ENCODE measurements at regions of chr7 and their contacts with region 1.

Region 1: GRCh38 chr7:77651573-77652162 is 44.6 kb upstream of the RSBN1L start:
- DNase-seq: peak; percentile 63
- ATAC-seq: no peak
- H3K4me3 Mint-ChIP-seq: no peak overlapping the region
- H3K27ac Mint-ChIP-seq: no peak overlapping the region
- H3K4me1 Mint-ChIP-seq: no peaks in the 10 kb centered on the region
- H3K27me3 Mint-ChIP-seq: no peaks in the 10 kb centered on the region

Region 2: DNA sequence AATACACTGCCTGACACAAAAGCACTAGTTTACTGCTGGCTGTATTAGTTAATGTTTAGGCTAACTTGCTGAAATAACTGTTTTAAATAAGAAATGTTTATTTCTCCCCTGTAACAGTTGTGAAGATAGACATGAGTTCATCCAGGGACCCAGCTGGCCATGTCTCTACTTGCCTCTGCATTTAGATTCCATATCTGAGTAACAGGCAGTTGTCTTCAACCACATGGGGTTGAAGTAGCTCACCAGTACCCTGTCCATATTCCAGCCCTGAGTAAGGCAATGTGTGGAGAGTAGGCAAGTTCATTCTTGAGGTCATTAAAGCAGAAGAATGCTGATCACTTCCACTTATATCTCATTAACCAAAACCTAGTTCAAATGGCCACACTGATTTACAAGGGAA is 13.5 kb after region 1 on chr7:
- CTCF ChIA-PET with region 1: interaction called, 14 read pairs
- POLR2A ChIA-PET with region 1: no interaction called
- DNase-seq: no peak
- ATAC-seq: no peak
- H3K4me3 Mint-ChIP-seq: no peak overlapping the region
- H3K27ac Mint-ChIP-seq: no peak overlapping the region
- H3K4me1 Mint-ChIP-seq: no peaks in the 10 kb centered on the region
- H3K27me3 Mint-ChIP-seq: no peaks in the 10 kb centered on the region

Region 3: GRCh38 chr7:77707504-77707992 is 55.9 kb after region 1 on chr7:
- CTCF ChIA-PET with region 1: no interaction called
- POLR2A ChIA-PET with region 1: no interaction called
- DNase-seq: no peak
- ATAC-seq: no peak
- H3K4me3 Mint-ChIP-seq: no peak overlapping the region
- H3K27ac Mint-ChIP-seq: no peak overlapping the region
- H3K4me1 Mint-ChIP-seq: peaks cover 24% of the 10 kb centered on the region
- H3K27me3 Mint-ChIP-seq: no peaks in the 10 kb centered on the region

Region 4: DNA sequence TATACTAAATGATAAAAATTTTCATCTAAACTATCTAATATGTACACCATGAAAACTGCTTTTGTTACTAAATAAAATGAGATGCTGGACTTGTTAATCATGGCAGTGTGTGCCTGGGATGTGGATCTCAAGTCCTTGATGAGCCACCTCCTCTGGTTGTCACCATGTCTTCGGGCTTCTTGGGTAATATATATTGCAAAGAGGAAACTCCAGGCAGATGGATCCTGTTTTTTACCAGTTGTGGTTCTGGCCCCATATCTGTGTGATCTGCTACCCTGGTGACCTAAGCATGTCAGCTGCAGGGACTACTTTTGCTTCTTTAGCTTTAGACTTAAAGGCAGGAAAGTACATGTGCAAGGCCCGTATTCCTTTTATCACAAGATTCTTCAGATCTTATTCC is 100.4 kb after region 1 on chr7:
- CTCF ChIA-PET with region 1: interaction called, 37 read pairs
- POLR2A ChIA-PET with region 1: no interaction called
- DNase-seq: no peak
- ATAC-seq: no peak
- H3K4me3 Mint-ChIP-seq: no peak overlapping the region
- H3K27ac Mint-ChIP-seq: no peak overlapping the region
- H3K4me1 Mint-ChIP-seq: peaks cover 22% of the 10 kb centered on the region
- H3K27me3 Mint-ChIP-seq: no peaks in the 10 kb centered on the region

Region 5: DNA sequence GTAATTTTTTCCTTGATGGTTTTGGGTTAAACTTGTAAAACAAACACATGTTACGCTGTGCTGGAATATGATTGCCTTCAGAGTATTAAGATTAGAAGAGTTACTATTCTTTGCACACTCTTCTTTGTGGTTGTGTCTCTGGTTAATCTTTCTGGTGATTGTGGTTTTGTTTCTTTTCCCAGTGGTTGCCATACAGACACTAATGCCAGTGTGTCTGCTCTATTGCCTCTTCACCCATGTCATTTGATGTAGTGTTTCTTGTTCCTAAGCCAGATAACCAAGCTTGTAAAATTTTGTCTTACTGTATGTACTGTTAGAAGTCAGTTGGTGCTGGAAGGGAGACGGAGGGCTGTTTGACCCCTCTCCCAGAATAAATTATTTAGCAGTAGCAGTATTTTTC is 271.8 kb after region 1 on chr7:
- CTCF ChIA-PET with region 1: interaction called, 10 read pairs
- POLR2A ChIA-PET with region 1: no interaction called
- DNase-seq: no peak
- ATAC-seq: no peak
- H3K4me3 Mint-ChIP-seq: no peak overlapping the region
- H3K27ac Mint-ChIP-seq: no peak overlapping the region
- H3K4me1 Mint-ChIP-seq: peaks cover 7% of the 10 kb centered on the region
- H3K27me3 Mint-ChIP-seq: no peaks in the 10 kb centered on the region

Region 6: GRCh38 chr7:78039790-78040776 is 388.4 kb after region 1 on chr7:
- CTCF ChIA-PET with region 1: interaction called, 18 read pairs
- POLR2A ChIA-PET with region 1: no interaction called
- DNase-seq: peak; percentile 58
- ATAC-seq: peak; percentile 90
- H3K4me3 Mint-ChIP-seq: no peak overlapping the region
- H3K27ac Mint-ChIP-seq: no peak overlapping the region
- H3K4me1 Mint-ChIP-seq: peaks cover 4% of the 10 kb centered on the region
- H3K27me3 Mint-ChIP-seq: peaks cover 12% of the 10 kb centered on the region